ENCODE measurements at regions of chr3 and their contacts with region 1.

Region 1: GRCh38 chr3:47910777-47911440 is 105.3 kb downstream of the MAP4 start:
- DNase-seq: peak in 1 of 2 donors; percentile 25
- ATAC-seq: peak; percentile 93 to 97 (median 94)
- H3K4me3 ChIP-seq: no peak overlapping the region
- H3K27ac ChIP-seq: peak overlapping the region; percentile 80
- H3K4me1 ChIP-seq: peaks cover 25% of the 10 kb centered on the region
- H3K27me3 ChIP-seq: no peaks in the 10 kb centered on the region
- CTCF ChIP-seq: no peak

Region 2: DNA sequence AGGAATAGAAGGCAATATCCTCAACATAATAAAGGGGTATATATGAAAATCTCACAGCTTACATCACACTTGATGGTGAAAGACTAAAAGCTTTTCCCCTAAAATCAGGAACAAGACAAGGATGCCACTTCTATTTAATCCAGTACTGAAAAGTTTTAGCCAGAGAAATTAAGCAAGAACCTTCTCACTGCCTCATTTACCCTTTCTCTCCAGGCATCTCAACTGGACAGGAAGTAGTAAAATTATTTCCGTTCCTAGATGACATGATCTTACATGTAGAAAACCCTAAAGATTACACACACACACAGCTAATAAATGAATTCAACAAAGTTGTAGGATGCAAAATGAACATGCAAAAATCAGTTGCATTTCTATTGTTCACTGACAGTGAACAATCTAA is 446.3 kb before region 1 on chr3:
- intact Hi-C with region 1: loop called in 1 of 2 experiments (anchors 5 kb)
- DNase-seq: no peak
- ATAC-seq: no peak
- H3K4me3 ChIP-seq: no peak overlapping the region
- H3K27ac ChIP-seq: no peak overlapping the region
- H3K4me1 ChIP-seq: peaks cover 9% of the 10 kb centered on the region
- H3K27me3 ChIP-seq: no peaks in the 10 kb centered on the region
- CTCF ChIP-seq: no peak

Measured in psoas muscle (tissue), 8 donors.